ENCODE measurements at regions of chr17 and their contacts with region 1.

Region 1: GRCh38 chr17:57995076-57995956 is 7.3 kb upstream of the VEZF1 start:
- DNase-seq: peak; percentile 57
- H3K4me3 Mint-ChIP-seq: no peak overlapping the region
- H3K27ac Mint-ChIP-seq: no peak overlapping the region
- H3K4me1 Mint-ChIP-seq: peaks cover 64% of the 10 kb centered on the region
- H3K27me3 Mint-ChIP-seq: no peaks in the 10 kb centered on the region

Region 2: DNA sequence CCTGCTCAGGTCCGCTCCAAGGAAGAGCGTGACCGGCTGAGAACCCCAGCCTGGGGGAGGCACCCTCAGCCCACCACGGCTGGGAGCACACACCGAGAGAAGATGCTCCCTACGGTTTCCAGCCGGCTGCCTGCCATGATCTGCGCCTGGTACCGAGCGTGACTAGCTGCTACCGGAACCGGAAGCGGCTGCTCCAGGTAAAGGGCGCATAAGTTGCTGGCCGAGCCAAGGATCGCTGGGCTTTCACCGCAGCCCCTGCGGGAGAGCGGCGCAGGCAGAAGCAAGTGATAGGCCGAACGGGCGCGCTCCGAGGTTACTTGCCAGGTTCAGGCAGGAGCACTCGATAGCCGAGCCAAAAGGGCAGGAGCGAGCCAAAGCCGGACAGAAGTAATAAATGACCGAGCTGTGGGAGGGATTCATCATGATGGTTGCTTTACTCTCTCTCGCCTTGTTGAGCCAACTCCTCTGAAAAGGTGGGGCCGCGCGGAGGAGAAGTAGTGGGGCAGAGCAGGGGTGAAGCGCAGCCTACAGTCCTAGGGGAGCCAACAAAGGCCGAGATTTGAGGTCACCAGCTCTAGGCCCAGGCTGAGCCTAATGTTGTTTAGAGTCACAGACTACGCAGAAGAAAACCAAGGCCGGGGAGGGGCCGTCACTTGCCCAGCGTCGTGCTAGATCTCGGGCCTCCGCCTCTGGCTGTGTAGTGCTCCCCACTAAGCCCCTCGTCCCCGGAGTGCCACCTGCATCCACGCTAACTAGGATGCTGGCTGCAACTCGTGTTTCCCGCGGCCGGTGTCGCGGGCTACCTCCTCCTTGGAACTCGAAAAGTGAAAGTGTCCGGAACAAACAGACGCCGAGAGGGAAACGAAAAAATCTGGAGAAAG is 145.2 kb before region 1 on chr17 and contains the start of gene MRPS23:
- CTCF ChIA-PET with region 1: interaction called, 137 read pairs
- POLR2A ChIA-PET with region 1: interaction called, 16 read pairs
- DNase-seq: peak; percentile 98
- H3K4me3 Mint-ChIP-seq: peak within 1 kb of the TSS; percentile 95
- H3K27ac Mint-ChIP-seq: peak within 1 kb of the TSS; percentile 98
- H3K4me1 Mint-ChIP-seq: peaks cover 43% of the 10 kb centered on the region
- H3K27me3 Mint-ChIP-seq: no peaks in the 10 kb centered on the region
- total RNA-seq, gene MRPS23: 30.8 to 35.3 TPM

Region 3: GRCh38 chr17:57861000-57861789 is 134.1 kb before region 1 on chr17:
- CTCF ChIA-PET with region 1: interaction called, 137 read pairs
- POLR2A ChIA-PET with region 1: interaction called, 6 read pairs
- DNase-seq: peak; percentile 37
- H3K4me3 Mint-ChIP-seq: peak overlapping the region; percentile 54
- H3K27ac Mint-ChIP-seq: no peak overlapping the region
- H3K4me1 Mint-ChIP-seq: peaks cover 12% of the 10 kb centered on the region
- H3K27me3 Mint-ChIP-seq: peaks cover 45% of the 10 kb centered on the region

Region 4: DNA sequence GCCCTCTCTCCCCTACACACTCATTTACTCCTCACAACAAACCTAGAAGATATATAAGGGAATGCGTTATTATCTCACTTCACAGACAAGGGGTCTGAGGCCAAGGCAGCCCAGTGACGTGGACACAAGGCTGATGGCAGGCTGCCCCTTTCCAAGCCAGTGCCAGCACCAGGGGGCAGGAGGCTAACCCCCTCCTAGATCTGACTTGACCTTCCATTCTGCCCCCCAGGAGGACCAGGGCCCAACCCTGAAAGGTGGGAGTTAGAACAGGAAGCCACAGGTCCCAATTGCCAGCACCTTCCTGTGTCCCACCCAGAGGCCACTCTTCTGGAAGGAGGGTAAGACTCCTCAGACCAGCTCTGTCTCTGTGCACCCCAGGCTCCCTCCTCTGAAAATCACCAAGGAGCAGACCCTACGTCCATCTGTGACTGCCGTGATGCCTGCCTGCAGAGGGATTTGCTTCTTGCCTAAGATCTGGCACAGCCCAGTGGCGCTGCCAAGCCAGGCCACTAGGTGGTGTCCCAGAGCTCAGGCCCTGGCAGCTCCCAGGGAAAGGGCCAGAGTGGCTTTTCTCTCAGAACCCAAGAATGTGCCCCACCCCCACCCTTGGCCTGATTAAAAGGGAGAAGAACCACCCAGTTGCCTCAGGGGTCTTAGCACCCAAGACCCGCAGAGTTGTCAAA is 103.0 kb before region 1 on chr17:
- CTCF ChIA-PET with region 1: interaction called, 24 read pairs
- POLR2A ChIA-PET with region 1: interaction called, 4 read pairs
- DNase-seq: peak; percentile 84
- H3K4me3 Mint-ChIP-seq: no peak overlapping the region
- H3K27ac Mint-ChIP-seq: no peak overlapping the region
- H3K4me1 Mint-ChIP-seq: peaks cover 11% of the 10 kb centered on the region
- H3K27me3 Mint-ChIP-seq: peaks cover 8% of the 10 kb centered on the region

Region 5: GRCh38 chr17:57898487-57899311 is 96.6 kb before region 1 on chr17:
- CTCF ChIA-PET with region 1: interaction called, 11 read pairs
- POLR2A ChIA-PET with region 1: interaction called, 3 read pairs
- DNase-seq: no peak
- H3K4me3 Mint-ChIP-seq: no peak overlapping the region
- H3K27ac Mint-ChIP-seq: no peak overlapping the region
- H3K4me1 Mint-ChIP-seq: peaks cover 30% of the 10 kb centered on the region
- H3K27me3 Mint-ChIP-seq: peaks cover 2% of the 10 kb centered on the region

Region 6: GRCh38 chr17:58082870-58083490 is 87.7 kb after region 1 on chr17 and contains the start of gene DYNLL2:
- CTCF ChIA-PET with region 1: interaction called, 4 read pairs
- POLR2A ChIA-PET with region 1: interaction called, 14 read pairs
- DNase-seq: peak; percentile 92
- H3K4me3 Mint-ChIP-seq: peak within 1 kb of the TSS; percentile 88
- H3K27ac Mint-ChIP-seq: peak within 1 kb of the TSS; percentile 73
- H3K4me1 Mint-ChIP-seq: peaks cover 35% of the 10 kb centered on the region
- H3K27me3 Mint-ChIP-seq: peaks cover 24% of the 10 kb centered on the region
- total RNA-seq, gene DYNLL2: 29.4 to 29.7 TPM

Region 7: GRCh38 chr17:58112970-58113631 is 117.8 kb after region 1 on chr17:
- CTCF ChIA-PET with region 1: interaction called, 10 read pairs
- POLR2A ChIA-PET with region 1: interaction called, 3 read pairs
- DNase-seq: peak; percentile 86
- H3K4me3 Mint-ChIP-seq: no peak overlapping the region
- H3K27ac Mint-ChIP-seq: no peak overlapping the region
- H3K4me1 Mint-ChIP-seq: no peaks in the 10 kb centered on the region
- H3K27me3 Mint-ChIP-seq: peaks cover 10% of the 10 kb centered on the region

Region 8: DNA sequence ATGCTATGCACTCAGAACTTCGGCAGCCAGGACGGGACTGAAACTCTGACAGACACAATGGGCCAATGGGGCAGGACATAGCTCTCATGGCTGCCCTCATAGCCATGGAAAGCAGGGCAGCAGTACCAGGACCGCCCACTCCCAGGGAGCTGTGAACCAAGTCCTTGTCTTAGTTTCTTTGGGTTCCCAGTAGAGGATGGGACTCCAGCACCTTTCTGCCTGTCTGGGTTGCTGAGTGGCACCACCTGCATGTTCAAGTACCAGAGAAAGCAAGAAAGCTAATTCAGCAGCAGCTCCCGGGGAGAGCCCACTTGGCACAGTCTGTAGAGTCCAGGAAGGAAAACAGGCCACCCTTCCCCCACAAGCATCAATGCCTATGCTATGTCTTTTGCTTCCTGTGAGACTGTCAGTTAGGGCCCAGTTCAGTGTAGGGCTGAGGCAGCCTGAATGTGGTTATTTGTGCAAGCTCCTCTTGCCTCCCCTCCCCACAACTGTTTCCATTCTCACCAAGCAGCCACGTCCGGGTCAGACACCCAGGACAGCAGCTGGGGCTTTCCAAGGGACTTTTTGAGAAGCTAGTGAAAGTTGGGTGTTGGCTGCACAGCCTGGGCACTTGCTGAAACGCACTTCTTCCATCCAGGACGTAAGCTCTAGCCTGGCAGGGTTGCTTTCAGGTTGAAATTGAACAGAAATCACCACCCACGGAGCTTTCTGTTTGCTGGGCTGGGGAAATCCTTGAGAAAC is 348.9 kb after region 1 on chr17:
- CTCF ChIA-PET with region 1: no interaction called
- POLR2A ChIA-PET with region 1: no interaction called
- DNase-seq: peak; percentile 92
- H3K4me3 Mint-ChIP-seq: peak overlapping the region; percentile 98
- H3K27ac Mint-ChIP-seq: peak overlapping the region; percentile 100
- H3K4me1 Mint-ChIP-seq: peaks cover 85% of the 10 kb centered on the region
- H3K27me3 Mint-ChIP-seq: no peaks in the 10 kb centered on the region

Measured in activated CD4-positive, alpha-beta memory T cell treated with anti-CD3 and anti-CD28 coated beads, Interleukin-2, amount 10 ng/mL, durations not matched to agents 7 days and 5 days (primary cell).